Activated CD4-positive, alpha-beta memory T cell treated with anti-CD3 and anti-CD28 coated beads for 36 hours (primary cell): ENCODE measurements at regions of chr17 and their contacts with region 1.

Region 1: DNA sequence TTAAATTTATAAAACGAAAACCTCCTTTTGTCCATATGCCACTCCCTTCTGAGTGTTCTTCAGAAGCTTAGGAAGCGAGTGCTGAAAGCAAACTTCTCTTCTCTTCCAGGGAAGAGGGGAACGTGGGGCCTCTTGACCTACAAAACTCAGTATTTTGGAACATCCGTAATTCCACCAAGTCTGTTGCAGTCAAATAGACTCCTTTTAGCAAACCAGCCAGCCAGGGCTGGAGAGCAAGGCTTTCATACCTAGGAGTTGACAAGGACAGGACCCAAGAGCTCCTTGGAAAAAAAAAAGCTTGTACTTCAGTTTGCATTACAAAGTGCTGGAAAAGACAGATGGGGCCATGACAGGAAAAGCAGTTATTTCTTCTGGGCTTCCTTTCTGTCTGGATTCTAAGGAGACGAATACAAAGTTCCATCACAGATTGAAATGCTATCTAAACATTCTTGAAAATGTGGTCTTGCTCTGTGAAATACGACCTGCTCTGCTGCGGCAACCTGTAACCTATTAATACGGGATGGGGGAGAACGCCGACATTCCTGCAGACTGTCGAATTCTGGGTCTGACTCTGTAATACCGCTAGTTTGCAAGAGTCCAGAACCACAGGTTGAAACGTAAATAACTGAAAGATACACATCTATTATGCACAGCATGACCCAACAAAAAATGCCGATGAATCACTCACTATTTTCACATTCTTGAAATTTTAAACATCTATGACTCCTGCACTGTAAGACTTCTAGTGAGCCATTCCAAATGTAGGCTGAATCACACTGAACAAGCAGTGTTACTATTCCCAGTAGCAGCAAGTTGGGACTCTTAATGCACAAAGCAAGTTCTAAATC is 20.6 kb downstream of the VPS53 start:
- DNase-seq: no peak
- H3K4me3 Mint-ChIP-seq: no peak overlapping the region
- H3K27ac Mint-ChIP-seq: no peak overlapping the region
- H3K4me1 Mint-ChIP-seq: no peaks in the 10 kb centered on the region
- H3K27me3 Mint-ChIP-seq: no peaks in the 10 kb centered on the region

Region 2: DNA sequence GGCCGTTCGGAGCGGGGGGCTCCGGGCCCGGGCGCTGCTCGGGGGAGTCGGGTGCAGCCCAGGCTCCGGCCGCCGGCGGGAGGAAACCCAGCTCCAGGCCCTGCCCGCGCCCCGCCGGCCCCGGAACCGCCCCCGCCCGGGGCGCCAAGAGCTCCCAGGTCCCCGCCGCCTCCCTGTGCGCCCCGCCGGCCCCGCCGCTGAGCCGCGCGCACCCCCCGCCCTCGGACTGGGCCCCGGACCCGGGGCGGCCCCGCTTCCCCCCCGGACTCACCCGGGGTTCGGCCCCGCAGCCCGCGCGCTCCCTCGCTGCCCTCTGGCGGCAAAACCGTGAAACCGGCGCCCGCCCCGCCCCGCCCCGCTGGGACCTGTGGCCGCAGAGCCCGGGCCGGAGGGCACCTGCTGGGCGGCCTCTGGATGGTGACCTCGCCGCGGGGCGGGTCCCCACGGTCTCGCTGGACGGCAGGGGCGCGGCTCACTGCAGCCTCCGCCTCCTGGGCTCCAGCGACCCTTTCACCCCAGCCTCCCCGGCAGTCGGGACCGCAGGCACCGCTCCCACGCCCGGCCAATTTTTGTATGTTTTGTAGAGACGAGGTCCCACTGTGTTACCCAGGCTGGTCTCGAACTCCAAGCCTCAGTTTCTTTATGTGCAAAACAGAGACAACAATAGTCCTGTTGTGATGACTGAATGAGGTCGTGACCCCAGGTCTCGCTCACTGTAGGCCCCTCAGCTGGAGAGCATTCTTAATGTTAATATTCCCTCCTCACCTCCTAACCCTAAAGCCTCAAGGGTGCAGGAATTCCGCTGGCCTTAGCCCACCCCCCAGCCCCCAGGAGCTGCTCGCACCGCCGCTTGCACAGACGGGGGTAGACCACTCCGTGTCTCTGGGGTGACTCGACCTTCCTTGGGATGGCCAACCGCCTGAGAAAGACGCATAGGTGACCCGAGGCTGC is 307.8 kb before region 1 on chr17:
- CTCF ChIA-PET with region 1: interaction called, 3 read pairs
- POLR2A ChIA-PET with region 1: no interaction called
- intact Hi-C with region 1: loop called (anchors 10 kb)
- DNase-seq: peak; percentile 83
- H3K4me3 Mint-ChIP-seq: peak overlapping the region; percentile 65
- H3K27ac Mint-ChIP-seq: no peak overlapping the region
- H3K4me1 Mint-ChIP-seq: peaks cover 7% of the 10 kb centered on the region
- H3K27me3 Mint-ChIP-seq: peaks cover 7% of the 10 kb centered on the region

Region 3: DNA sequence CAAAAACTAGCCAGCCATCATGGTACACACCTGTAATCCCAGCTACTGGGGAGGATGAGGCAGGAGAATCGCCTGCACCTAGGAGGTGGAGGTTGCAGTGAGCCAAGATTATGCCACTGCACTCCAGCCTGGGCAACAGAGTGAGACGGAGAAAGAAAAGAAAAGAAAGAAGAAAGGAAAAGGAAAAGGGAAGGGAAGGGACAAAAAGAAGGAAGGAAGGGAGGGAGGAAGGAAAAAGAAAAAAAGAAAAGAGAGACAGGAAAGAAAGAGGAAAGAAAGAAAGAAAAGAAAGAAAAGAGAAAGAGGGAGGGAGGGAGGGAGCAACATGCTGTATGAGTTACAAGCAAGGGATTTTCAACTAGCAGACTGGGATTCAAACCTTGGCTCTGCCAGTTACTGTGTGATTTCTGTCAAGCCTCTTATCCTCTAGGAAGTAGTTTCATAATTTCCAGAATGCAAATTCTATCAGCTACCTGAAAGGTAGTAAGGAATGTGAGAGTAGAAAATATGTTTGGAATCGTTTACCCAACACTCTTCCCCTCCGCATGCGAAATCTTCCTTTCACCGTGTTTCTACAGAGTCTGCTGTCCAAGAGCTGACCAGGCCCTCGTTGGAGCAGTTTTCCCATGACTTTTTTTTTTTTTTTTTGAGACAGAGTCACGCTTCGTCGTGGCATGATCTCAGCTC is 22.8 kb before region 1 on chr17:
- CTCF ChIA-PET with region 1: no interaction called
- POLR2A ChIA-PET with region 1: no interaction called
- intact Hi-C with region 1: no loop called
- DNase-seq: no peak
- H3K4me3 Mint-ChIP-seq: no peak overlapping the region
- H3K27ac Mint-ChIP-seq: no peak overlapping the region
- H3K4me1 Mint-ChIP-seq: no peaks in the 10 kb centered on the region
- H3K27me3 Mint-ChIP-seq: no peaks in the 10 kb centered on the region

Region 4: GRCh38 chr17:1055751-1056645 is 362.0 kb after region 1 on chr17:
- CTCF ChIA-PET with region 1: no interaction called
- POLR2A ChIA-PET with region 1: no interaction called
- intact Hi-C with region 1: no loop called
- DNase-seq: peak; percentile 53
- H3K4me3 Mint-ChIP-seq: no peak overlapping the region
- H3K27ac Mint-ChIP-seq: no peak overlapping the region
- H3K4me1 Mint-ChIP-seq: peaks cover 2% of the 10 kb centered on the region
- H3K27me3 Mint-ChIP-seq: no peaks in the 10 kb centered on the region